ENCODE measurements at regions of chr2 and their contacts with region 1.

Region 1: GRCh38 chr2:24613154-24613814 is 122.2 kb downstream of the NCOA1 start:
- DNase-seq: peak; percentile 54
- CTCF ChIP-seq: peak; percentile 29

Region 2: GRCh38 chr2:24489465-24489847 is 123.8 kb before region 1 on chr2:
- CTCF ChIA-PET with region 1: no interaction called
- POLR2A ChIA-PET with region 1: no interaction called
- DNase-seq: no peak
- CTCF ChIP-seq: no peak

Region 3: GRCh38 chr2:24626131-24626530 is 12.8 kb after region 1 on chr2:
- CTCF ChIA-PET with region 1: interaction called, 11 read pairs
- POLR2A ChIA-PET with region 1: no interaction called
- DNase-seq: no peak
- CTCF ChIP-seq: no peak